Mammary epithelial cell (primary cell): ENCODE measurements at regions of chr2 and their contacts with region 1.

Region 1: DNA sequence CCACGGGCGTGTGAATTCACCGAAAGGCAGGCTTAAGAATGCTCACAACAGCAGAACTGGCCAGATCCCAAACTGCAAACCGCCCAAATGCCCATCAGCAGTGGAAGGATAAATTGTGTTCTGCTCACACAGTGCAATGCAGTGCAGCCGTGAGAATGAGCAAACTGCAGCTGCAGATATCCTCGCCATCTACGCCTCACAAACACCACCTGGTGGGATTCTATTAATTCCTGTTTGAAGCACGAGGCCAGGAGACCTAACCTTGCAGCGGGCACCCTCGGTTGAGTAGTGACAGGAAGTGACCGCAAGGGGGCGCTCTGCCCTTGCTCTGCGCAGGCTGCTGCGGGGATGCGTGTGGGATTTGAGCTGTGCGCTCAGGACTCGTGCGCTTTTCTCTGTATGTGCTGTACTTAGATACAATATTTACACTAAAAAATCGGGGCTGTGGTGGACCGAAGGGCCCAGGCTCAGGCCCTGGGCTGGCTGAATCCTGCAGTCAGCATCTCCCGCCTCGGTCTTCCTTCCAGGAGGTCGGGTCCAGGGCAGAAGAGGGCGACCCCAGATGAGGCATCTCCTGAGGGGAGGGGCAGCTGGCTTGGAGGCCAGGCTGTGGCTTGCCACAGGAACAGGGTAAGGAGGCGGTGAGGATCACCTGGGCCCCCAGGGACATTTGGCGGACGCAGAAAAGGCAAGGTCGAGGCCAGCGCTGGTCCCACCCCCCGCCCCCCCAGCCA is 19.8 kb upstream of the PDIA6 start:
- DNase-seq: peak; percentile 64
- H3K4me3 ChIP-seq: no peak overlapping the region
- H3K27ac ChIP-seq: no peak overlapping the region
- H3K4me1 ChIP-seq: no peaks in the 10 kb centered on the region
- H3K27me3 ChIP-seq: peaks cover 4% of the 10 kb centered on the region
- CTCF ChIP-seq: peak; percentile 95 to 99

Region 2: GRCh38 chr2:10900216-10901109 is 68.1 kb after region 1 on chr2:
- CTCF ChIA-PET with region 1: interaction called, 21 read pairs
- dilution Hi-C with region 1: loop called (anchors 5 kb)
- in situ Hi-C with region 1: no loop called
- intact Hi-C with region 1: loop called (anchors 2 kb)
- DNase-seq: peak; percentile 69
- H3K4me3 ChIP-seq: no peak overlapping the region
- H3K27ac ChIP-seq: no peak overlapping the region
- H3K4me1 ChIP-seq: peaks cover 21% of the 10 kb centered on the region
- H3K27me3 ChIP-seq: no peaks in the 10 kb centered on the region
- CTCF ChIP-seq: peak; percentile 43 to 50

Region 3: DNA sequence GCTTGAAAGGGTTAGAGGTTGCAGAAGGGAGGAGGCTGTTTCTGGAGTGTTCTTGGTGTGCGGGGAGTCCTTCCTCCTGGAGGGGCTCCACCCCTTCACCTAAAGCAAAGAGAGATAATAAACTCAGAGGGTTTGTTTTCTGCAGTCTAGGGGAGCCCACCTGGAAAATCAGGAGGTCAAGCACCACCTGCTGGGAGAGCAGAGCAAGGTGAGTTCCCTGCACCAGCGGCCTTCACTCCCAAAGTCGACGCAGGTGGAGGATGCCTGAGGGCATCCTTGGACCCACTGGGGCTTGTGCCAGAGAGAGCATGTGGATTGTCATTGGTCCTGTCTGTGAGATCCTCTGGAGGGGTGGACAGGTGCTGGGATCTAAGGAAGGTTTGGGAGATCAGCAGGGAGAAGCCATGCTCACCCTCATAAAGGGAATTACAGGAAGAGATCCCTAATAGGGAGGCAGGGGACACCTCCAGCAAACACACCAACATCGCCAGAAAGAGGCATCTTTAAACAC is 196.1 kb after region 1 on chr2:
- CTCF ChIA-PET with region 1: no interaction called
- dilution Hi-C with region 1: no loop called
- in situ Hi-C with region 1: no loop called
- intact Hi-C with region 1: loop called (anchors 1 kb)
- DNase-seq: no peak
- H3K4me3 ChIP-seq: no peak overlapping the region
- H3K27ac ChIP-seq: no peak overlapping the region
- H3K4me1 ChIP-seq: no peaks in the 10 kb centered on the region
- H3K27me3 ChIP-seq: peaks cover 2% of the 10 kb centered on the region
- CTCF ChIP-seq: peak; percentile 20 to 47

Region 4: DNA sequence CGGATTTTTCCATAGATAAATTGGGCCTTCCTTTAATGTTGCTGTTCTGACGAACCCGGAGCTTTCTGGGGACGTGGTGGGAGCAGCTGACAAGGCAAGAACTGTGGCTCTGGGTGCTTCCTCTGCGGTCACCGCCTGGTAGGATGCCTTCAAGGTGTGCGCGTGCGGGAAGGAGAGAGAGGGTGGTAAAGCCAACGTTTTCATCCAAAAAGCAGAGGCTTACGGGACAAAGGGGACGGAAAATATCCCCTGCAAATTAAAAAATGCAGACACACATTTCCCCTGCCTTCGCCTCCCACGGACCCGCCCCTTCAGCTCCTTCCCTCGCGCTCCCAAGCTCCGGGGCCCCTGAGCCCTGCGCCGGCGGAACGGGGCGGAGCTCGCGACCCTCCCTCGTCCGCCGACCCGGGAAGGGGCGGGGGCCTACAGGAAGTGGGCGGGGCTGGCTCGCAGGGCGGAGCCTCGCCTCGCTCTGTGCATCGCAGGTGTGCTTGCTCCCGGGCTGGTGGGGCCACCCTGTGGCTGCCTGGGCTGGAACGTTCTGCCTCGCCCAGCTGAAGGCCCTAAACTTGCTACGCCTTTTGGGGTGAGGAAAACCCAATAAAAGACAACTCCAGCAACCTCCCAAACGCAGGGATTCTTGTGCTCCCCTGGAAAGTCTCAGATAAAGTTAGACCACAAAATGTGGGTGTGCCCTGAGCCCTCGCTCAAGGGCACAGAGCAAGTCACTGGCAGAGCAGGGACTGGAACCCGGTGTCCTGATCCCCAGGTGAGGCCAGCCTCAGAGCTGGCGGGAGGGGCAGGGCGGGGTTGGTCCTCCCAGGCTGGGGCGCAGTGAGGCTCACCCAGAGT is 297.5 kb after region 1 on chr2:
- CTCF ChIA-PET with region 1: interaction called, 8 read pairs
- dilution Hi-C with region 1: loop called (anchors 5 kb)
- in situ Hi-C with region 1: no loop called
- intact Hi-C with region 1: loop called (anchors 1 kb)
- DNase-seq: no peak
- H3K4me3 ChIP-seq: peak overlapping the region in 2 of 3 experiments; percentile 16 to 35
- H3K27ac ChIP-seq: no peak overlapping the region
- H3K4me1 ChIP-seq: peaks cover 28% of the 10 kb centered on the region
- H3K27me3 ChIP-seq: no peaks in the 10 kb centered on the region
- CTCF ChIP-seq: peak; percentile 22 to 65

Region 5: DNA sequence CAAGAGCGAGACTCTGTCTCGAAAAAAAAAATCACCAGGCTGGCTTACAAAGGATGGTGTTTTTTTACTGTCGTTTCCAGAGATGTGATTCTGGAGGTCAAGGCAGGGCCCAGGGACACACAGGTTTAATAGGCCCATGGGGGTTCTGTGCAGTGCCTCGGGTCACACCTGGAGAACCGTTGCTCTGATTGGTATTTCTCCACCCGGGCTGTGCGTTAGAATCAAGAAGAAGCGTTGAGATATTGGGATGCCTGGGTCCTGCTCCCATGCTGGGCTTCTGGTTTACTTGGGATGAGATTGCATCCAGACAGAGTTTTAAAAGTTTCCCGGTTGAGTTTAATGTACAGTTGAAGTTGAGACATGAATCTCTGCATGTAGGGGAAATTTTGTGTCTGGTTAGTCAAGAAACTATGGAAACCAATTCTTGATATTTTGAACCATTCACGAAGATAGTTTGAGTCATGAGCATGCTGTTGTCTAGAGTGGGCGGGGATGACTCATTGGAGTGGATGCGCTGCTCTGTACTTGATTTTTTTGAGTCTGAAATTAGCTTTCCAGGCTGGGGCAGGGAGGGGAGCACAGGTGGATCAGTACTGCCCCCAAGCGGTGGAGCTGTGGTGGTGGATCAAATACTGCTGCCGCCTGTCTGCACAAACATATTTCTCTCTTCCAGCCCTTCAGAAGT is 751.6 kb after region 1 on chr2:
- CTCF ChIA-PET with region 1: interaction called, 3 read pairs
- dilution Hi-C with region 1: no loop called
- in situ Hi-C with region 1: loop called in 1 of 2 experiments (anchors 25 kb)
- intact Hi-C with region 1: loop called (anchors 5 kb)
- DNase-seq: peak; percentile 95
- H3K4me3 ChIP-seq: no peak overlapping the region
- H3K27ac ChIP-seq: peak overlapping the region; percentile 30
- H3K4me1 ChIP-seq: peaks cover 4% of the 10 kb centered on the region
- H3K27me3 ChIP-seq: no peaks in the 10 kb centered on the region
- CTCF ChIP-seq: peak; percentile 78 to 92